ENCODE measurements at regions of chr7 and their contacts with region 1.

Region 1: GRCh38 chr7:23570592-23571200 is 26.5 kb upstream of the CCDC126 start:
- DNase-seq: peak; percentile 87
- ATAC-seq: peak; percentile 99
- H3K4me3 ChIP-seq: no peak overlapping the region
- H3K27ac ChIP-seq: peak overlapping the region; percentile 29; the same call in 1 of the 2 replicates
- H3K4me1 ChIP-seq: no peaks in the 10 kb centered on the region
- H3K27me3 ChIP-seq: no peaks in the 10 kb centered on the region
- CTCF ChIP-seq: peak; percentile 92

Region 2: DNA sequence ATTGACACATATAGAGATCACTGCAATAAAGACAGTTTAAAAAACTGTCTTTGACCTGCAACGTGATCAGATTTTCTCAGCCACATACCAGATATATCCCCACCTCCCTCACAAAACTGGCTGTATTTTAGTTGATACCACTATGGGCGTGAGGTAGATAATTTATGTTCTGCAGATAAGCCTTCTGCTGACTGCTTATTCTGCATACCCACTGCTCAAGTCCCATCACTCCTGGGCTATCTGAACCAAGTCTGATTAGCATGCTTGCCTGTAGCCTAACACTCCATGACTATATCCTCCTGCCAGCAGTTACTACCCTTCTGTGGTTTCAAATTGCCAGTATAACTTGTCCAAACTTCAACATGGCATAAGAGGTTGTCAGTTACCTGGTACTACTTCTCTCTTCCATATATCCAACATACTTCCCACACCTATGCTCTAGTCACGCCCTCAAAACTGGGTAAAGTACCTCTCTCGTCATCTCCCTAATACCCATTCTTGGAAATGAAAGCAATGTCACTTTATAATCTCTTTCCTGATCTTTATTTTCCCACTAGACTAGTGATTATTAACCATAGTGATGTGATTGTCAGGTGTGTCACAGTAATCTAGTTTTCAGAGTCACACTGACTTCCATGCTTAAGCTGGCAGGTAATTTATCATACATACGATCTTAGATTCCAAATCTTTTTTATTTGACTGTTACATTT is 200.8 kb before region 1 on chr7:
- CTCF ChIA-PET with region 1: no interaction called
- POLR2A ChIA-PET with region 1: no interaction called
- in situ Hi-C with region 1: no loop called
- intact Hi-C with region 1: no loop called
- DNase-seq: no peak
- ATAC-seq: no peak
- H3K4me3 ChIP-seq: no peak overlapping the region
- H3K27ac ChIP-seq: no peak overlapping the region
- H3K4me1 ChIP-seq: no peaks in the 10 kb centered on the region
- H3K27me3 ChIP-seq: no peaks in the 10 kb centered on the region
- CTCF ChIP-seq: no peak

Region 3: DNA sequence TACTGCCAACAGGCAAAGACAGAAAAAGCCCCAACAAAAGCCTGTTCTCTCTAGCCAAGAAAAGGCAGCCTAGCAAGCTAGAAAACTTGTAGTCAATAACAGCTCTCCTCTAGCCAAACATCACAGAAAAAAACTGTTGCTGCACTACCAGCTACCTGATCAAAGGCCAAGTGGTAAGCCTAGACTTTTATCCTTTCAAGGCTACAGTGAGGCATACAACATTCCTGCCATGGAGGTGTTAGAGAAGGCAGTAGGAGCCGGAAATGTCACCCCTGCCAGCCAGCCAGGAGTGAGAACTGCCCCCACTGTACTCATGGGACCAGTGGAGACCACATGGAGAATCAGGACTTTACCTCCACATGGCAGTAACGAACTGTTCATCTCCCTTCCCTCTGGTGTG is 57.7 kb after region 1 on chr7:
- CTCF ChIA-PET with region 1: no interaction called
- POLR2A ChIA-PET with region 1: no interaction called
- in situ Hi-C with region 1: no loop called
- intact Hi-C with region 1: no loop called
- DNase-seq: no peak
- ATAC-seq: peak; percentile 12; the same call in 1 of the 2 replicates
- H3K4me3 ChIP-seq: no peak overlapping the region
- H3K27ac ChIP-seq: no peak overlapping the region
- H3K4me1 ChIP-seq: no peaks in the 10 kb centered on the region
- H3K27me3 ChIP-seq: no peaks in the 10 kb centered on the region
- CTCF ChIP-seq: no peak

Region 4: GRCh38 chr7:23696916-23697441 is 126.3 kb after region 1 on chr7:
- CTCF ChIA-PET with region 1: interaction called, 4 read pairs
- POLR2A ChIA-PET with region 1: no interaction called
- in situ Hi-C with region 1: no loop called
- intact Hi-C with region 1: loop called (anchors 5 kb)
- DNase-seq: no peak
- ATAC-seq: peak; percentile 97
- H3K4me3 ChIP-seq: no peak overlapping the region
- H3K27ac ChIP-seq: no peak overlapping the region
- H3K4me1 ChIP-seq: no peaks in the 10 kb centered on the region
- H3K27me3 ChIP-seq: no peaks in the 10 kb centered on the region
- CTCF ChIP-seq: peak; percentile 94

Region 5: DNA sequence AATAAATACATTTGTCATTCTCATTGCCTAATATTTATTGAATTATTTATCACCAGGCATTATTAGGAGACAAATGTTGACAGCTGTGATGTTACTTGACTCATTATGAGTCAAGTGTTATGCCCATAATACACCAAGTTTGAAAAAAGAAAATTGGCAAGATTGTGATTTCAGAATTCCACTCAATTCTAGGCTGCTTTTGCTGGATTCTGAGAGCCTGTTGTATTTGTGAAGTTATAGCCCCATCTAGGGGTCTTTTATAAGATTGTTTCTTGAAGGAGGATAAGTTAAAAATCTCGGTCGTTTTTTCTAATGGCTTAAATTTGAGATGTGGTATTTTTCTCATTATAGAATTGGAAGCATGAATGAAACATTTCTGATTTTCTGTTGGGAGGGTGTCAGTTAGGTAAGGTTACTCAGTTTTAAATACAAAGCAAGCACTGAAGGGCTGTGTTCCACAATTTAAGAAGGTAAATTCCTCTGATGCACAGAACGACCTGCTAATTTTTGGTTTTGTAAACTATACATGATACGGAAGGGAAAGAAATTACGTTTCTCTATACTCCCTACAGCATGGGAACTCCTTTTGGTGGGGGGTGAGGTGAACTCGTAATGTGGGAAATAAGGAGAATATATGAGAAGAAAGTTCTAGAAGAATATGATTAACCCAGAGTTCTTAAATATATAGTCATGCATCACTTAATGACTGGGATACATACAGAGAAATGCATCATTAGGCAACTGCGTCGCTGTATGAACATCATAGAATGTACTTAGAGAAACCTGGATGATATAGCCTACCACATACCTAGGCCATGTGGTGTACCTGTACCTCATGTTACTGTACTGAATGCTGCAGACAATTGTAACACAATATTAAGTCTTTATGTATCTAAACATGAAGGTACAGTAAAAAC is 141.9 kb after region 1 on chr7:
- CTCF ChIA-PET with region 1: interaction called, 4 read pairs
- POLR2A ChIA-PET with region 1: no interaction called
- in situ Hi-C with region 1: no loop called
- intact Hi-C with region 1: loop called (anchors 1 kb)
- DNase-seq: peak; percentile 74
- ATAC-seq: peak; percentile 72
- H3K4me3 ChIP-seq: no peak overlapping the region
- H3K27ac ChIP-seq: peak overlapping the region; percentile 49
- H3K4me1 ChIP-seq: peaks cover 22% of the 10 kb centered on the region
- H3K27me3 ChIP-seq: no peaks in the 10 kb centered on the region
- CTCF ChIP-seq: peak; percentile 63; the same call in 1 of the 2 replicates

Region 6: GRCh38 chr7:24381894-24382505 is 811.3 kb after region 1 on chr7:
- CTCF ChIA-PET with region 1: no interaction called
- POLR2A ChIA-PET with region 1: no interaction called
- in situ Hi-C with region 1: no loop called
- intact Hi-C with region 1: loop called (anchors 10 kb)
- DNase-seq: peak; percentile 8
- ATAC-seq: peak; percentile 79; the same call in 1 of the 2 replicates
- H3K4me3 ChIP-seq: no peak overlapping the region
- H3K27ac ChIP-seq: no peak overlapping the region
- H3K4me1 ChIP-seq: no peaks in the 10 kb centered on the region
- H3K27me3 ChIP-seq: no peaks in the 10 kb centered on the region
- CTCF ChIP-seq: peak; percentile 72

Region 7: DNA sequence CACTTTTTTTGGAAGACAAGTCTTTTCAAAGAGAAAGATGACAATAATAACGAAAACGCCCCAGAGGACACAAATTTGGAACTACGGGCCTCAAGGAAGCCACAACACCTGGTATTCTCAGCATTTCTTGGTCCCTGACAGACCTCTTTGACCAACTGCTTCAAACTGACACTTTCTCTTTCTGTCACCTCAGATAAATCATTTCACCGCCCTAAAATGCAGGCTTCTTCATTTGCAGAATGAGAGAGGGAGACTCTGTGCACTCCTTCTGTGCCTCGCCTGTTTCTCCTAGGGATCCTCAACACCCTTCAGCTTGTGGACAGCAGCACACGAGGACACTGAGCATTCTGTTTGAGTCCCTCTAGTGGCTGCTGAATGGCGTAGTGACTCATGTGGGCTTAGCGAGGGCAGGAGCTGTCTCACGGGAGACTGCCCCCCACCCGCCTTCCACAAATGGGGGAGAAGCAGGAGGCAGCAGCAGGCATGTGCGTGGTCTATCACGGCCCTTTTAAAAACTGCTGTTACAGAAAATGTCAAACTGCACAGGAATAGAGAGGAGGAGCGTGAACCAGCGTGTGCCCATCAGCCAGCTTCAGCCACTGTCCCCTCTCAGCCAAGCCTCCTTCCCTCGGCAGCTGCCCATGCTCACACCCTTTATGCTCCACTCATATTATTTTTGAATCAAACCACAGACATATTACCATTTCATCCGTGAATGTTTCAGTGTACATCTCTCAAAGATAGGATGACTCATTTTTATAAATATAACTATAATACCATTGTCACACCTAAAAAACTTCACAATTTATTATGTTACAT is 1145.2 kb after region 1 on chr7:
- CTCF ChIA-PET with region 1: no interaction called
- POLR2A ChIA-PET with region 1: no interaction called
- in situ Hi-C with region 1: no loop called
- intact Hi-C with region 1: loop called (anchors 10 kb)
- DNase-seq: peak; percentile 25
- ATAC-seq: peak; percentile 89
- H3K4me3 ChIP-seq: no peak overlapping the region
- H3K27ac ChIP-seq: no peak overlapping the region
- H3K4me1 ChIP-seq: no peaks in the 10 kb centered on the region
- H3K27me3 ChIP-seq: no peaks in the 10 kb centered on the region
- CTCF ChIP-seq: peak; percentile 80

Region 8: DNA sequence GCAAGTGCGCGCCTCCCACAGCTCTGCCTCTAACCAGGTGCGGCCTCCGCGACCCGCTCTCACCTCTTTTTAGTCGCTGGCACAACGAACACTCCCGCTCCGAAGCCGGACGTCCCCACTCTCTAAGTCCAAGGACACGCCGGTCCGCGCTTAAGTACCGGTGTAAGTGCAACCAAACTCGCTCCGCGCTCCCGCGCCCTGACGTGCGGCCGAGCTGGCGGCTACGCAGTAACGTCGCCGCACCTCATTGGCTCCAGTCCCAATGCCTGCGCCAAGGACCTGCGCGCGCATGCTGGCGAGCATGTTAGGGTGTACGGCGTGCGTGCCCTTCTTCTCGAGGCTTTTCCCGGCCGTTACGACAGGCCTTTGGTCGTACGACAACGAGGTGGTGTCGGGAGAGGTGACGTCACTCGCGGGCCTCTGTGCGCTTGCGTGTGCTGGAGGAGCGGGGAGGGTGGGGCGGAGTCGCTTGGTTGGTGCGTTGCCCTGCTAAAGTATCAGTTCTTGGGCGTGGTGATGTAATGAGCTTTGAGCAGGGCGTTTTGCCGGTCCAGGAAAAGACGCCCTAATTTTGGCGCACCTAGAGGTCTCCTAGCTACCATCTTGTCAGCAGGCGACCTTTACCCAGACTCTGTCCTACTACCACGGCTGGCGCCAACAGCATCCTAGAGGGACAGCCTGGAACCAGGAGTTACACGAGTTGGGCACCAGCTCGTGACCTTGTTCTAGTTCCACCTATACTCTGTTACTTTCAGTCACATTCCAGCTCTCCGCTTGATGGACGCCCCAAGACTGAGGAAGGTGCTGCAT is 1554.6 kb after region 1 on chr7 and contains the start of gene CYCS:
- CTCF ChIA-PET with region 1: interaction called, 12 read pairs
- POLR2A ChIA-PET with region 1: no interaction called
- in situ Hi-C with region 1: no loop called
- intact Hi-C with region 1: no loop called
- DNase-seq: peak; percentile 100
- ATAC-seq: peak; percentile 98
- H3K4me3 ChIP-seq: peak within 1 kb of the TSS; percentile 75 to 99
- H3K27ac ChIP-seq: peak within 1 kb of the TSS; percentile 99
- H3K4me1 ChIP-seq: 0 out of 2 replicates have a peak, but pooled peaks cover 3% of the 10 kb centered on the region
- H3K27me3 ChIP-seq: peaks cover 3% of the 10 kb centered on the region; the same call in 1 of the 2 replicates
- CTCF ChIP-seq: no peak
- total RNA-seq, gene CYCS: 245 TPM